GM18951 (cell line): ENCODE measurements at regions of chr12 and their contacts with region 1.

Region 1: DNA sequence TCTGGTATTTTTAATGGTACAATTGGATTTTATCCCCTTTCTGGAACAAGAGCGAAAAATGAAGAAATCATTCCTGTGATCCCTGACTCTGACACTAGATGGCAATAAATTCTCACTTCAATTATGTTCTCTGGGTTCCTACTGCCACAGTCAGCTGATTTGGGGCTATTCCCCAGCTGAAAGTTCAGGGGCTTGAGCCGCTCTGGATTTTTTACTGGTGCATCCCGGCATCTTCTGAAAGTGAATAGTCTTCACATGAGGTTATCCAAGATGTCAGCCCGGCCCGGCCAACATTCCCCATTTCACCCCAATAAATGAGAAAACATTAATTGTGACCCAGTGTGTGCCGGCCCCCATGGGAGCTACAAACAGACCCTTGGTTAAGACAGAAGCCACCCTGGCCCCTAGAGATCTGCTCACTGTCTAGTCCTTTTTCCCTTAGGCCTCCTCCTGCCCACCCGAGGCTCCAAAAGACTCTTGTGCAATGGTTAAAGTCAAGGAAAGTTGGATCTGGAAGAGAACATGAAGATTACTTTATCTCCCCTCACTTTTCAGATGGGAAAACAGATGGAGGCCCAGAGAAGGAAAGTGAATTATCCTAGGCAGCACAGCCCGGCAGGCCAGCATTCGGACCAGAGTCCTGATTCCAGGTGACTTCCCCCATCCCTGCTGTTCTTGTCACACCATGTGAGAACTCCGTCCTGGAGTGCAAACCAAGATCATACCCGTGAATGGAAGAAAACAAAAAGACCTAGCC is 20.8 kb downstream of the CKAP4 start:
- POLR2A ChIP-seq: no peak

Region 2: GRCh38 chr12:106113042-106113441 is 114.0 kb before region 1 on chr12:
- in situ Hi-C with region 1: no loop called
- POLR2A ChIP-seq: no peak

Region 3: DNA sequence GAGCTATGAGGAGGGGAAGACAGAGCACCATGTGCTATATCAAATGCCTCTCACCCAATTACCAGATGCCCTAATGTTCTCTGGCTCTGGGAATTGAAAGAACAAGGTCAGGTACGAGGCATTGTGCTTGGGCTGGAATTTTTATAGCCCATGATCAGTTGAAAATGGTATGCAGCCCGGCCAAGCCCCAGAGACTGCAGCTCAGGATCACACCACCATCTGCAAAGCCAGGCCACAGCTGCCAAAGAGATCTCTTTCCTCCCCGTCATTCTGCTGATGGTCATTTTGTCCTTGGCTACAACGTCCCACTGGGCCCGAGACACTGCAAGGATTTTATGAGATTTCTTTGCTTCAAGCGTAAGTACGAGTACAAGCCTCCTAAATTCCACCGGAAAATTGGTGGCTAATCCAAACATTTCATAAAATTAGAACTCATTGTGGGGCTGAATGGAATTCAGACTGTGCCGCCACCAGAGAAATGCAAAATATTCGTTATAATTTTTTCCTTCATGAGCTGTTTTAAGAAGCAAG is 103.4 kb before region 1 on chr12:
- in situ Hi-C with region 1: no loop called
- POLR2A ChIP-seq: no peak

Region 4: DNA sequence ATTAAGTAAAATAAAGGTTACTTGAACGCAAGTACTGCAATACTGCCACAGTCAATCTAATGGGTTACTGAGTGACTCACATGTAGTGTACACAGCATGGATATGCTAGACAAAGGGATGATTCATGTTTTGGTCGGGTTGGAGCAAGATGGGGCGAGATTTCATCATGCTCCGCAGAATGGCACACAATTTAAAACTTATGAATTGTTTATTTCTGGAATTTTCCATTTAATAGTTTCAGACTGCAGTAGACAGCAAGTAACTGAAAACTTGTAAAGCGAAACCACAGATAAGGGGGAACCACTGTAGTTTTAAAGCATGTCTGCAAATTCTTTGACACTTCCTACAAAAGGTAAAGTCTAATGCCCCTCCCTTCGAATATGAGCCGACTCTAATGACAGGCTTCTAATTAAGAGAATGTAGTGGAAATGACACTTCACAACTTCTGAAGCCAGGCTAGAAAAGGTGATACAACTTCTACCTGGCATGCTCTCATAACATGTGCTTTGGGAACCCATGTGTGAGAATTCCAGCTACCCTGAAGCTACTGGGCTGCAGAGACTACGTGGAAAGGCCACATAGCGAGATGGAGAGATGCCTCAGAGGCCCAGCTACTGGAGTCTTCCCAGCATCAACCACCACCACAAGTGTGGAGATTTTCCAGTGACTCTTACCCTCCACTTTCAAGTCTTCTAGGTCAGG is 61.6 kb after region 1 on chr12:
- in situ Hi-C with region 1: loop called (anchors 5 kb)
- POLR2A ChIP-seq: no peak